ENCODE measurements at regions of chr20 and their contacts with region 1.

Region 1: GRCh38 chr20:40450105-40450504 is 238.9 kb downstream of the MAFB start:
- DNase-seq: no peak
- H3K4me3 ChIP-seq: no peak overlapping the region
- H3K27ac ChIP-seq: no peak overlapping the region
- H3K4me1 ChIP-seq: no peaks in the 10 kb centered on the region
- H3K27me3 ChIP-seq: no peaks in the 10 kb centered on the region
- CTCF ChIP-seq: no peak
- POLR2A ChIP-seq: no peak

Region 2: GRCh38 chr20:40397483-40397882 is 52.6 kb before region 1 on chr20:
- intact Hi-C with region 1: no loop called
- DNase-seq: no peak
- H3K4me3 ChIP-seq: no peak overlapping the region
- H3K27ac ChIP-seq: no peak overlapping the region
- H3K4me1 ChIP-seq: no peaks in the 10 kb centered on the region
- H3K27me3 ChIP-seq: no peaks in the 10 kb centered on the region
- CTCF ChIP-seq: no peak
- POLR2A ChIP-seq: no peak

Region 3: GRCh38 chr20:40668449-40669228 is 218.5 kb after region 1 on chr20:
- intact Hi-C with region 1: no loop called
- DNase-seq: no peak
- H3K4me3 ChIP-seq: no peak overlapping the region
- H3K27ac ChIP-seq: no peak overlapping the region
- H3K4me1 ChIP-seq: no peaks in the 10 kb centered on the region
- H3K27me3 ChIP-seq: no peaks in the 10 kb centered on the region
- CTCF ChIP-seq: no peak
- POLR2A ChIP-seq: no peak

Region 4: DNA sequence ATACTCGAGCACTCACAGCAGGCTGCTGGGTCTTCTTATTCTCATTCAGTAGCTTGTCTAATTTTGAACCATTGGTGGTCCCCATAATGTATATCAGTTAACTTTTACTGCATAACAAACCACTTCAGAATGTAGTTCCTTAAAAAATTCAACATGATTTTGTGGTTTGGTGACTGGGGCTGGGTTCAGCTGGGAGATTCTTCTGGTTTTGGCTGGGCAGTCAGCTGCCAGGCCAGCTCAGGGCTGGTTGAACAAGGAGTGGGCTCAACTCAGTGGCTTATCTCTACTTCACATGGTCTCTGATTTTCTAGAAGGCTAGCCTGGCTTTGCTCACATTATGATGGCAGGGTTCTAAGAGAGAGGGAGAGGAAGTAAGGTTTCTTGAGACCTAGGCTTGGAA is 1460.5 kb after region 1 on chr20:
- intact Hi-C with region 1: loop called (anchors 10 kb)
- DNase-seq: no peak
- H3K4me3 ChIP-seq: no peak overlapping the region
- H3K27ac ChIP-seq: no peak overlapping the region
- H3K4me1 ChIP-seq: no peaks in the 10 kb centered on the region
- H3K27me3 ChIP-seq: peaks cover 0 to 4% of the 10 kb centered on the region in 2 donors
- CTCF ChIP-seq: no peak
- POLR2A ChIP-seq: no peak